ENCODE measurements at regions of chr1 and their contacts with region 1.

Region 1: GRCh38 chr1:245156081-245156735 is 1.4 kb downstream of the KIF26B start:
- DNase-seq: peak; percentile 93
- H3K4me3 ChIP-seq: peak overlapping the region; percentile 84 to 99
- H3K27ac ChIP-seq: peak overlapping the region; percentile 68 to 98; a peak in 3 of 4 replicates
- H3K4me1 ChIP-seq: peaks cover 0 to 41% of the 10 kb centered on the region in 2 experiments; a peak in 2 of 4 replicates
- H3K27me3 ChIP-seq: no peaks in the 10 kb centered on the region
- CTCF ChIP-seq: peak; percentile 63
- EP300 ChIP-seq: peak in 1 of 2 experiments; percentile 10; a peak in 1 of 4 replicates
- RAD21 ChIP-seq: peak; percentile 74

Region 2: DNA sequence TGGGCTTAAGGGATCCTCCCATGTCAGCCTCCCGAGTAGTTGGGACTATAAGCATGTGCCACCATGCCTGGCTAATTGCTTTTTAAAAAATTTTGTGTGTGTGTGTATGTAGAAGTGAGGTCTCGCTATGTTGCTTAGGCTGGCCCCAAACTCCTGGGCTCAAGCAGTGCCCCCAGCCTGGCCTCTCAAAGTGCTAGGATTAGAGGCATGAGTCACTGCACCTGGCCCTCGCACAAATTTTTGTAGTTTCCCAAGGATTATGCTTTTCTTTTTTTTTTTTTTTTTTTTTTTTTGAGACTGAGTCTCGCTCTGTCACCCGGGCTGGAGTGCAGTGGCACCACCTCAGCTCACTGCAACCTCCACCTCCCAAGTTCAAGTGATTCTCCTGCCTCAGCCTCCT is 147.4 kb before region 1 on chr1:
- CTCF ChIA-PET with region 1: no interaction called
- POLR2A ChIA-PET with region 1: no interaction called
- DNase-seq: no peak
- H3K4me3 ChIP-seq: no peak overlapping the region
- H3K27ac ChIP-seq: no peak overlapping the region
- H3K4me1 ChIP-seq: no peaks in the 10 kb centered on the region
- H3K27me3 ChIP-seq: no peaks in the 10 kb centered on the region
- CTCF ChIP-seq: no peak
- EP300 ChIP-seq: no peak
- RAD21 ChIP-seq: no peak

Region 3: DNA sequence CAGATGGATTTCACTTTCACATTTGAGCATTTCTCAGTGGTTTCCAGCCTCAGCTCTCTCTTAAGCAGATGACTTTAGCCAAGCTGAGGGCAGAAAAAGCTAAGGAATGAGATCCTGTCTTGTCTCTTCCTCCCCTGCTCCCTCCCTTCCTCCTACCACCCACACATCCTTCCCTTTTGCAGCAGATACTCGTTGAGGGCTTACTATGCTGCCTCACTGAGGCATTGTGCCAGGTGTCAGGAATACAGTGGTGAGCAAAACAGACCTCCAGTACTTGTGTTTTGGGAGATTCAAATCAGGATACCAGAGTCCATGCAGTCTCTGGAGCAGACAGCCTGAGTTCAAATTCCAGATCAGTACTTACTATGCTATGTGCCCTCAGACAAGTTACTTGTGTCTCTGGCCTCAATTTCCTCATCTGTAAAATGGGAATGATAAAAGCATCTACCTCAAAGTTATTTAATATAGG is 41.7 kb after region 1 on chr1:
- CTCF ChIA-PET with region 1: interaction called, 10 read pairs
- POLR2A ChIA-PET with region 1: interaction called, 3 read pairs
- DNase-seq: peak; percentile 52
- H3K4me3 ChIP-seq: no peak overlapping the region
- H3K27ac ChIP-seq: peak overlapping the region; percentile 21 to 73; a peak in 3 of 4 replicates
- H3K4me1 ChIP-seq: peaks cover 0 to 29% of the 10 kb centered on the region in 2 experiments; a peak in 2 of 4 replicates
- H3K27me3 ChIP-seq: no peaks in the 10 kb centered on the region
- CTCF ChIP-seq: no peak
- EP300 ChIP-seq: no peak
- RAD21 ChIP-seq: no peak

Region 4: GRCh38 chr1:245380790-245381535 is 224.8 kb after region 1 on chr1:
- CTCF ChIA-PET with region 1: interaction called, 13 read pairs
- POLR2A ChIA-PET with region 1: no interaction called
- DNase-seq: peak; percentile 42
- H3K4me3 ChIP-seq: no peak overlapping the region
- H3K27ac ChIP-seq: peak overlapping the region in 1 of 2 experiments; percentile 26; a peak in 1 of 4 replicates
- H3K4me1 ChIP-seq: peaks cover 0 to 32% of the 10 kb centered on the region in 2 experiments; a peak in 2 of 4 replicates
- H3K27me3 ChIP-seq: no peaks in the 10 kb centered on the region
- CTCF ChIP-seq: peak; percentile 50
- EP300 ChIP-seq: no peak
- RAD21 ChIP-seq: peak; percentile 64

Region 5: DNA sequence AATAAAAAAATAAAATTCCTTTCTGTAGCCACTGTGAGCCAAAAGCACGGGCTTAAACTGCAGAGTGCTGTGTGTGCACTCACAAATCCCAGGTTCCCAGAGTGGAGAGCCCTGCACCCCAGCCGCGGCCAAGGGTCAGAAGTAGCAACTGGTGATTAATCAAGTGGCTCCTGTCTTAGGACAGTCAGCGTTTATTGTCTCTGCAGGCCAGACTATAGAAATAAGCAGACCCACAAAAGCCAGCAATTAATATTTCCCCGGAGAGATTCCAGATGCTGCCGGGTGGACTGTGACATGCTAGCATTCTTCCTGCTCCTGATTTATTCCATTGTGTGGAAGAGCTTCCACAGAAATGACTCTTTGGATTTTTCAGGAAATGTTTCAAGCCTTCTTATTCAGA is 410.7 kb after region 1 on chr1:
- CTCF ChIA-PET with region 1: interaction called, 12 read pairs
- POLR2A ChIA-PET with region 1: interaction called, 3 read pairs
- DNase-seq: peak; percentile 82
- H3K4me3 ChIP-seq: no peak overlapping the region
- H3K27ac ChIP-seq: peak overlapping the region; percentile 8 to 99; a peak in 3 of 4 replicates
- H3K4me1 ChIP-seq: peaks cover 0 to 49% of the 10 kb centered on the region in 2 experiments; a peak in 2 of 4 replicates
- H3K27me3 ChIP-seq: no peaks in the 10 kb centered on the region
- CTCF ChIP-seq: no peak
- EP300 ChIP-seq: peak in 1 of 2 experiments; percentile 97; a peak in 2 of 4 replicates
- RAD21 ChIP-seq: peak; percentile 41

Region 6: GRCh38 chr1:245790441-245790840 is 634.2 kb after region 1 on chr1:
- CTCF ChIA-PET with region 1: interaction called, 10 read pairs
- POLR2A ChIA-PET with region 1: interaction called, 6 read pairs
- DNase-seq: no peak
- H3K4me3 ChIP-seq: no peak overlapping the region
- H3K27ac ChIP-seq: peak overlapping the region; percentile 78 to 100
- H3K4me1 ChIP-seq: peaks cover 20 to 62% of the 10 kb centered on the region in 2 experiments
- H3K27me3 ChIP-seq: no peaks in the 10 kb centered on the region
- CTCF ChIP-seq: no peak
- EP300 ChIP-seq: peak in 1 of 2 experiments; percentile 40; a peak in 1 of 4 replicates
- RAD21 ChIP-seq: no peak

Region 7: DNA sequence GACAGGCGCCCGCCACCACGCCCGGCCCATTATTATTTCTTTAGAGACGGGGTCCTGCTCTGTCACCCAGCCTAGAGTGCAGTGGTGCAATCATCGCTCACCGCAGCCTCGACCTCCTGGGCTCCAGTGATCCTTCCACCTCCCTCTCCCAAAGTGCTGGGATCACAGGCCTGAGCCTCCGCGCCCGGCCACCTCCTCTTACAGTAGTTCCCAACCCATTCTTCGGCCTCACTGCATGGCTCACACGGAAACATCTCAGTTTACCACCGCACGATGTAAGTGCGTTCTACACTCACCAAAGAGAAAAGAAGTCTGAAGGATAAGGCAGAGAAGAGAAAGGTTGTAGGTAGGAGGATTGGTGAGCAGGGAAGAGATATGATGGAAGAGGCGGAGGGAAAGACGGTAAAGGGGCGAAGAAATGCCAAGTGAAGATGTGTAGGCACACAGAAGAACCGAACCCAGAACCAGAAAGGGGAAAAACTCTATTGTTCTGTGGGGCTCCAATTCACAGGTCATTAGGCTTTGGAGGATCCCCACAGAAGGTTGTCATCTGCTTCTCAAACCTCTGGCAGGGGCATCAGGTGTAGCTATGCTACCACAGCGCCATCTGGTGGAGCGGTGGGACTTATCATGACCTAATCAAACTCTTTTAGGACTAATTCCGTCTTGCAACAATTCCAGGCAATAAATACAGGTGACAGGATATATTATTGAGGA is 846.7 kb after region 1 on chr1:
- CTCF ChIA-PET with region 1: interaction called, 83 read pairs
- POLR2A ChIA-PET with region 1: interaction called, 4 read pairs
- DNase-seq: peak; percentile 86
- H3K4me3 ChIP-seq: no peak overlapping the region
- H3K27ac ChIP-seq: peak overlapping the region in 1 of 2 experiments; percentile 92; a peak in 2 of 4 replicates
- H3K4me1 ChIP-seq: peaks cover 5 to 24% of the 10 kb centered on the region in 2 experiments; a peak in 3 of 4 replicates
- H3K27me3 ChIP-seq: no peaks in the 10 kb centered on the region
- CTCF ChIP-seq: peak; percentile 92
- EP300 ChIP-seq: peak in 1 of 2 experiments; percentile 35; a peak in 1 of 4 replicates
- RAD21 ChIP-seq: peak; percentile 100

Region 8: GRCh38 chr1:246497331-246497915 is 1341.2 kb after region 1 on chr1:
- CTCF ChIA-PET with region 1: interaction called, 16 read pairs
- POLR2A ChIA-PET with region 1: no interaction called
- DNase-seq: peak; percentile 64
- H3K4me3 ChIP-seq: no peak overlapping the region
- H3K27ac ChIP-seq: no peak overlapping the region
- H3K4me1 ChIP-seq: peaks cover under 1 to 1% of the 10 kb centered on the region in 2 experiments; a peak in 2 of 4 replicates
- H3K27me3 ChIP-seq: no peaks in the 10 kb centered on the region
- CTCF ChIP-seq: peak; percentile 86
- EP300 ChIP-seq: no peak
- RAD21 ChIP-seq: peak; percentile 70